ENCODE measurements at regions of chr11 and their contacts with region 1.

Region 1: DNA sequence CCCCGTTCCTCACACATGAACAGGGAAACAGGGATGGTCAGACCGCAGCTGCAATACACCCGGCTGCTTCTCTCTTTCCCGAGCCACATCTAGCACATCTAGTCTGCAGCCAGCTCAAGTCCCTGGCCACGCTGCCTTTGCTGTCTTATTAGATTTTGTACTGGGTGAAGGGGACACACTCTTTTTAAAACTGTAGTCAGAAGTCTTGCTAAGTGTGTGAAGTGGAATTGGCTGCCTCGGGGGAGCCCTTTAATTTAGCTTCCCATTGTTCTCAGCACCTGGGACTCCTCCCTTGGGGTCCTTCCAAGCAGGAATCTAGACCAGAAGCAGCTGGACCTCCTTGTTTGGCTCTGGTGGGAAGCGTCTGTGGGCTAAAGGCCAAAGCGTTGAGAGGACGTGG is 420.0 kb downstream of the CTTN start:
- DNase-seq: peak in 1 of 3 donors; percentile 1
- ATAC-seq: no peak
- H3K4me3 ChIP-seq: no peak overlapping the region
- H3K27ac ChIP-seq: no peak overlapping the region
- H3K4me1 ChIP-seq: no peaks in the 10 kb centered on the region
- H3K27me3 ChIP-seq: no peaks in the 10 kb centered on the region

Region 2: GRCh38 chr11:71418643-71419042 is 600.3 kb after region 1 on chr11:
- intact Hi-C with region 1: loop called in 2 of 4 experiments (anchors 10 kb)
- DNase-seq: no peak
- ATAC-seq: peak in 1 of 2 donors; percentile 14
- H3K4me3 ChIP-seq: no peak overlapping the region
- H3K27ac ChIP-seq: no peak overlapping the region
- H3K4me1 ChIP-seq: no peaks in the 10 kb centered on the region
- H3K27me3 ChIP-seq: no peaks in the 10 kb centered on the region